HEK293 (cell line): ENCODE measurements at regions of chr9 and their contacts with region 1.

Region 1: GRCh38 chr9:133238851-133239532 is 29.9 kb upstream of the OBP2B start:
- H3K4me3 ChIP-seq: peak overlapping the region; percentile 15; the same call in 1 of the 2 replicates
- H3K27ac ChIP-seq: no peak overlapping the region
- H3K4me1 ChIP-seq: no peaks in the 10 kb centered on the region
- CTCF ChIP-seq: peak; percentile 97

Region 2: GRCh38 chr9:133210202-133210532 is 28.8 kb before region 1 on chr9:
- CTCF ChIA-PET with region 1: interaction called, 13 read pairs
- POLR2A ChIA-PET with region 1: no interaction called
- H3K4me3 ChIP-seq: no peak overlapping the region
- H3K27ac ChIP-seq: no peak overlapping the region
- H3K4me1 ChIP-seq: no peaks in the 10 kb centered on the region
- CTCF ChIP-seq: no peak

Region 3: GRCh38 chr9:133306242-133307204 is 67.5 kb after region 1 on chr9:
- CTCF ChIA-PET with region 1: interaction called, 12 read pairs
- POLR2A ChIA-PET with region 1: no interaction called
- H3K4me3 ChIP-seq: no peak overlapping the region
- H3K27ac ChIP-seq: no peak overlapping the region
- H3K4me1 ChIP-seq: no peaks in the 10 kb centered on the region
- CTCF ChIP-seq: no peak

Region 4: GRCh38 chr9:133327834-133328484 is 89.0 kb after region 1 on chr9:
- CTCF ChIA-PET with region 1: interaction called, 40 read pairs
- POLR2A ChIA-PET with region 1: no interaction called
- H3K4me3 ChIP-seq: no peak overlapping the region
- H3K27ac ChIP-seq: no peak overlapping the region
- H3K4me1 ChIP-seq: no peaks in the 10 kb centered on the region
- CTCF ChIP-seq: no peak

Region 5: GRCh38 chr9:133335878-133336811 is 97.2 kb after region 1 on chr9 and contains the start of gene SURF6:
- CTCF ChIA-PET with region 1: interaction called, 40 read pairs
- POLR2A ChIA-PET with region 1: no interaction called
- H3K4me3 ChIP-seq: peak within 1 kb of the TSS; percentile 74
- H3K27ac ChIP-seq: peak within 1 kb of the TSS; percentile 71
- H3K4me1 ChIP-seq: peaks cover 4% of the 10 kb centered on the region; the same call in 1 of the 2 replicates
- CTCF ChIP-seq: no peak

Region 6: GRCh38 chr9:133945314-133945975 is 706.5 kb after region 1 on chr9:
- CTCF ChIA-PET with region 1: no interaction called
- POLR2A ChIA-PET with region 1: no interaction called
- H3K4me3 ChIP-seq: no peak overlapping the region
- H3K27ac ChIP-seq: no peak overlapping the region
- H3K4me1 ChIP-seq: no peaks in the 10 kb centered on the region
- CTCF ChIP-seq: no peak